IMR-90 (cell line): ENCODE measurements at regions of chr17 and their contacts with region 1.

Region 1: GRCh38 chr17:82494236-82495055 is 25.1 kb upstream of the FOXK2 start:
- DNase-seq: peak; percentile 97
- ATAC-seq: peak; percentile 84
- H3K4me3 ChIP-seq: no peak overlapping the region
- H3K27ac ChIP-seq: no peak overlapping the region
- H3K4me1 ChIP-seq: peaks cover 11% of the 10 kb centered on the region
- H3K27me3 ChIP-seq: no peaks in the 10 kb centered on the region
- CTCF ChIP-seq: peak; percentile 97
- POLR2A ChIP-seq: no peak
- RAD21 ChIP-seq: no peak; the same call in 1 of the 2 replicates

Region 2: DNA sequence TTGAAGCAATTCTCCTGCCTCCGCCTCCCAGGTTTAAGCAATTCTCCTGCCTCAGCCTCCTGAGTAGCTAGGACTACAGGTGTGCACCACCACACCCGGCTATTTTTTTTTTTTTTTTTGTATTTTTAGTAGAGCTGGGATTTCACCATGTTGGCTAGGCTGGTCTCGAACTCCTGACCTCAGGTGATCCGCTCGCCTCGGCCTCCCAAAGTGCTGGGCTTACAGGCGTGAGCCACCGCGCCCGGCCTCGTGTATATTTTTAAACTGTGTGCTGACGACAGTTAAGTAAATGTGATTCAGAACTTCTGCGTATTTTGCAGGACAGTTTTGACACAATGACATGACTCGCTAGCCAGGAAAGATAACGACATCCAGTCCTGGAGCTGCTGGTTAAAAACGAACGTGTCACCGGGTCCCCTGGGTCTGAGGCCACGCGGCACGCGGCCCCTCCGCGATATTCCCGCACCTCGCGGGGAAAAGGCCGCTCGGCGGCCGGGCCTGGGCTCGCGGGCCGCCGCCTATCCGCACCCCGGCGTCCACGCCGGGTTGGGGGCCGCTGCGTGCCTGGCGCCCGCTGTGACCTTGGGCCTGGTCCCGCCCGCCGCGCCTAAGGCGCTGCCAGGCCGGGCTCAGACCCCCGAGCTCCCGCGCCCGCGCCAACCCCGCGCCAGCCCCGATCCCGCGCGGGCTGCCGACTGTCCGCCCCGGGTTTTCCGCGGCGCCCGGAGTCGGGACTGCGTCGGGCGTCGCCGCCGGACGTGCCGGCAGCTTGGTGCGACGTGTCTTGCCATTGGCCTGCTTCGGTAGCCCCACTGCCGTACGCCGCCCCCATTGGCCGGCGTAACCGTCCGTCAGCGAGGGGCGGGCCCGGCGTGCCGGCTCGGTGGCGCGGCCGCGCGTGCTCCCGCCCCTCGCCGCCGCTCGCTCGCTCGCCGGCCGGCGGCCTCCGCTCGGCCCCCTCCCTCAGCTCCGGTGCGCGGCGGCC is 24.7 kb after region 1 on chr17 and contains the start of gene FOXK2:
- CTCF ChIA-PET with region 1: no interaction called
- POLR2A ChIA-PET with region 1: no interaction called
- dilution Hi-C with region 1: no loop called
- in situ Hi-C with region 1: no loop called
- intact Hi-C with region 1: loop called (anchors 2 kb)
- DNase-seq: peak; percentile 95
- ATAC-seq: peak; percentile 99
- H3K4me3 ChIP-seq: peak within 1 kb of the TSS; percentile 86
- H3K27ac ChIP-seq: peak within 1 kb of the TSS; percentile 68
- H3K4me1 ChIP-seq: peaks cover 3% of the 10 kb centered on the region; the same call in 1 of the 2 replicates
- H3K27me3 ChIP-seq: no peaks in the 10 kb centered on the region
- CTCF ChIP-seq: no peak
- POLR2A ChIP-seq: no peak
- RAD21 ChIP-seq: no peak
- total RNA-seq, gene FOXK2: 12.5 and 16.1 TPM in 2 replicates

Region 3: DNA sequence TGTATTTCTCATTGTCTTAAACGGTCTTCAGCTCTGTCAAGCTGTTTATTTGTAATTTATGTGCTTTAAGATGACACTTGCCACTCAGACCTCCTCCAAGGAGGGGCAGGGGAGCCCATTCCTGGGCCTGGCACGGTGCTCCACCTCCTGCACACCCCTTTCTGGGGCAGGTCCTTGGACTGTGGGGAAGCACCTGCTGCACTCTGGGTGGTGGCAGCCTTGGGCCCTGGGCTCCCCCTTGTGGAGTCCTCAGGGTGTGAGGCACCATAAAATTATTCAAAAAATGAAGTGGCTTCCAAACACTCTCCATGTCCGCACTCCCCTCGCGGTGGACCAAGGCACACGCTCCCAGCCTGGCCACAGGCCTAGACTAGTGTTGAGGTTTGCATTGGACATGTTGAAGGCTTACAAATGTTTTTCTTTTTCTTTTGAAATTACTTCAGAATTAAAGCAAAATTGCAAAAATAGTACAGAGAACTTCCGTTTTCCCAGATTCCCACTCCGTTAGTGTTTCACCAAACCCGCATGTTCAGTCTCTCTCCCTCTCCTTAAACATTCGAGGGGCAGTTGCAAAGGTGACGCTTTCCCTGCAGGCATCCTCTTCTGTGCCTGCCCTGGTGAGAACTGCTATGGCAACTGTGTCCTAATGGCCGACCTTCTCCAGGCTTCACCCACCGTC is 57.5 kb after region 1 on chr17:
- CTCF ChIA-PET with region 1: no interaction called
- POLR2A ChIA-PET with region 1: no interaction called
- dilution Hi-C with region 1: no loop called
- in situ Hi-C with region 1: no loop called
- intact Hi-C with region 1: loop called (anchors 5 kb)
- DNase-seq: peak; percentile 70
- ATAC-seq: peak; percentile 93
- H3K4me3 ChIP-seq: no peak overlapping the region
- H3K27ac ChIP-seq: no peak overlapping the region
- H3K4me1 ChIP-seq: peaks cover 4% of the 10 kb centered on the region
- H3K27me3 ChIP-seq: no peaks in the 10 kb centered on the region
- CTCF ChIP-seq: peak; percentile 84
- POLR2A ChIP-seq: no peak
- RAD21 ChIP-seq: peak; percentile 86